ENCODE measurements at regions of chr3 and their contacts with region 1.

Region 1: GRCh38 chr3:49021813-49022687 is at the start of gene NDUFAF3:
- DNase-seq: peak; percentile 85
- ATAC-seq: peak; percentile 72
- H3K4me3 ChIP-seq: peak within 1 kb of the TSS; percentile 80 to 96 (median 89)
- H3K27ac ChIP-seq: peak within 1 kb of the TSS; percentile 99
- H3K4me1 ChIP-seq: peaks cover 50% of the 10 kb centered on the region
- H3K27me3 ChIP-seq: no peaks in the 10 kb centered on the region; a peak in 1 of 5 replicates
- CTCF ChIP-seq: peak; percentile 97
- EP300 ChIP-seq: peak in 1 of 2 experiments; percentile 8; a peak in 1 of 4 replicates
- POLR2A ChIP-seq: peak in 1 of 2 experiments; percentile 95; a peak in 2 of 4 replicates
- RAD21 ChIP-seq: peak; percentile 57
- total RNA-seq, gene NDUFAF3: 50.0 and 51.9 TPM in 2 replicates

Region 2: GRCh38 chr3:48926425-48927392 is 95.3 kb before region 1 on chr3:
- CTCF ChIA-PET with region 1: no interaction called
- POLR2A ChIA-PET with region 1: no interaction called
- in situ Hi-C with region 1: no loop called
- intact Hi-C with region 1: no loop called
- DNase-seq: no peak
- ATAC-seq: no peak
- H3K4me3 ChIP-seq: no peak overlapping the region
- H3K27ac ChIP-seq: no peak overlapping the region
- H3K4me1 ChIP-seq: peaks cover 23% of the 10 kb centered on the region
- H3K27me3 ChIP-seq: no peaks in the 10 kb centered on the region
- CTCF ChIP-seq: no peak
- EP300 ChIP-seq: no peak
- POLR2A ChIP-seq: no peak
- RAD21 ChIP-seq: no peak

Region 3: DNA sequence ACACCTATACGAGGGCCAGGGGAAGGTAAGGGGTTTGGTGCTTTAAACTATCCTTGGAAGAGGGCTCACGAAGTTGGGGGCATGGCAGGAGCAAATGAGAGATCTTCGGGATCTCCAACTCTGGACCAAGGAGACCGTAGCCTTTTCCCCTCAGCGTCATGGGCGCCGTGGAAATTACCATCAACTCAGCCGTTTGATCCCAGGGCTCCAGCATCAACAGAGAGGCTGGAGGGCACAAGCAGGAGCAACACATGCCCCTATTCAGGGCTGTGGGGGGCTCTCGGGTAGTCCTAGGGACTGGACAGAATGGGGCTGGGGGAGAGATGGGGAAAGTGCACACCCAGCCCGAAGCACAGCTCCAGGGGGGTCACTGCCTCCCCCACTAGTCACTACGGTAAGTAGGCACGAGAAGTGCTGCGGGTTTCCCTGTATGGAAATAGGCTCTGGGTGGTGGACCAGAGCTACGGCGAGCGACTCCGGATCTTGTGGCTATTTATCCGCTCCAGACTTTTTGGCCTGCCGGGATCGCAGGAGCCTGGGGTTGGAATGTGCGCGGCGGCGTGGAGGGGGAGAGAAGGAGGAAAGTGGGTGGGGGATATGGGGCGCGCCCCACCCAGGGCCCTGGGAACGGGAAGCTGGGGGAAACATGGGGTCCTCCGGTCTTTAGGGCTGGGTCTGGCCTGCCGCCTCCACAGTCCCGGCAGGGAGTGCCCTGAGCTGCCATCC is 111.3 kb after region 1 on chr3:
- CTCF ChIA-PET with region 1: no interaction called
- POLR2A ChIA-PET with region 1: interaction called, 18 read pairs
- in situ Hi-C with region 1: no loop called
- intact Hi-C with region 1: no loop called
- DNase-seq: peak; percentile 80
- ATAC-seq: peak; percentile 60
- H3K4me3 ChIP-seq: peak overlapping the region; percentile 72 to 78 (median 77)
- H3K27ac ChIP-seq: peak overlapping the region; percentile 80
- H3K4me1 ChIP-seq: peaks cover 39% of the 10 kb centered on the region
- H3K27me3 ChIP-seq: no peaks in the 10 kb centered on the region
- CTCF ChIP-seq: peak; percentile 35
- EP300 ChIP-seq: no peak
- POLR2A ChIP-seq: peak in 1 of 2 experiments; percentile 31; a peak in 1 of 4 replicates
- RAD21 ChIP-seq: 0 out of 2 replicates have a peak, but pooled peaks have one; percentile 18

Measured in HepG2 (cell line).